PC-9 (cell line): ENCODE measurements at regions of chr16 and their contacts with region 1.

Region 1: DNA sequence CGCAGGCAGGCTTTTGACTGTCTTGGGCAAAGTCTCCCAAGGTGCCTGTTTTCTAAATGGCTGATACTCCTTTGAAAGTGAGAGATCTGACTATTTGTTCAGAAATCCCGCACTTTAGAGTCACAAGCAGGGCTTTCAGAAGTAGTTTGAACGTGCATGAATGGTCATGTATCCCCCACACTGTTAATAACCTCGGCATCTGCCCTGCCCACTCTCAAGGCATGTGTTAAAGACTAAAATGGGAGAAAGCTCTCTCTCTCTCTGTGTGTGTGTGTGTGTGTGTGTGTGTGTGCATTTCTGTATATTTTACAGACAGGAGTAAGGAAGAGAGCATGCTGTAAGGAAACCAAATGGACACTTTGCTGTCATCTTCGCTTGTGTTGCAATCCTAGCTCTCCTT is 163.7 kb downstream of the MAF start:
- DNase-seq: no peak
- H3K4me3 ChIP-seq: no peak overlapping the region
- H3K27ac ChIP-seq: no peak overlapping the region
- H3K4me1 ChIP-seq: no peaks in the 10 kb centered on the region
- H3K27me3 ChIP-seq: peaks cover 70% of the 10 kb centered on the region
- CTCF ChIP-seq: no peak

Region 2: DNA sequence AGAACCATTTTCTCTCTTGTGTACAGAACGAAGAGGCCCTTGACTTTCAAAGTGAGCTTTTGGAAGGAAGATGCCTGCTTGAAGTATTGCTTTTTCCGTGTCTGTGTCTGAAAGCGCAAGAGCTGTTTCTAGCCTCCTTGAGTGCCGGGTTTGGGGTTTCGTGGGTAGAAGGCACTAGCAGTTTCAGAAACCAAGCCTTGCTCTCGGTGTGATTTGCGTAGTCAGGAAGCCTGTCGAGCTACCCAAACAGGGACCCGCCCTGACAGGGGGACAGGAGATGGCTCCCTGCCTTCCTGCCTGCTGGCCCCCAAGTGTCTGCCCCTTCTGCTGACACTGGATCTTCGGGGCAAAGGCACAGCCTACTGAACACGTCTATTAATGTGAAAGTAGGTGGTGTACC is 158.4 kb before region 1 on chr16:
- CTCF ChIA-PET with region 1: no interaction called
- POLR2A ChIA-PET with region 1: interaction called, 10 read pairs
- intact Hi-C with region 1: no loop called
- DNase-seq: no peak
- H3K4me3 ChIP-seq: no peak overlapping the region
- H3K27ac ChIP-seq: no peak overlapping the region
- H3K4me1 ChIP-seq: no peaks in the 10 kb centered on the region
- H3K27me3 ChIP-seq: peaks cover 88% of the 10 kb centered on the region
- CTCF ChIP-seq: no peak

Region 3: DNA sequence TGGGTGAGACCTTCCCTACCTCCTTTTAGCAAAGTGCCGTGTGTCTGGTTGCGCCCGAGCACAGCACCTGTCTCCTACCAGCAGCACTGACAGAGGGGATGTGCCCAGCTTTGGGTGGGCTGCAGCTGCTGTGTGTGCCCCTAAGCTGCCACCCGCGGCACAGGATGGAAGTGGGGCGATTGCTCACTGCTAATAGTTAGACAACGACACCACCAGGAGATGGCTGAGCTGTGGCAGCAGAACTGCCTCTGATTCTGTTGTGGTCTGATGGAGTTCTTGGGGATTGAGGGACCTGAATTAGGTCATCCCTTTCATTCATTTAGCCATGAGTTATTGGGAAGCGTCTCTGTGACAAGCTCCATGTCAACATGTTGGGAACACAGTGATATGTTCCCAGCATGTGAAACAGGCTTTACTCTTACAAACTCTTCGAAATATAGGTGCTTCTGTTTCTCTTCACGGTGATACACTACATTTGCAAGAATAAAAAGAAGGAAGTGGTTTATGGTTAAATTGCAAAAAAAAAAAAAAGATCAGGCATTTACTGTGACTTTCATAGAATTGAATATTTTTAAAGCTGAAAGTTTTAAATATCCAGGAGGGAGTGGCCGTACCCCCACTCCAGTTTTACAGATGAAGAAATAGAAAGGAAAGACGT is 20.8 kb before region 1 on chr16:
- CTCF ChIA-PET with region 1: no interaction called
- POLR2A ChIA-PET with region 1: no interaction called
- intact Hi-C with region 1: no loop called
- DNase-seq: no peak
- H3K4me3 ChIP-seq: no peak overlapping the region
- H3K27ac ChIP-seq: no peak overlapping the region
- H3K4me1 ChIP-seq: no peaks in the 10 kb centered on the region
- H3K27me3 ChIP-seq: peaks cover 60% of the 10 kb centered on the region
- CTCF ChIP-seq: no peak